WTC11 (cell line): ENCODE measurements at regions of chr19 and their contacts with region 1.

Region 1: DNA sequence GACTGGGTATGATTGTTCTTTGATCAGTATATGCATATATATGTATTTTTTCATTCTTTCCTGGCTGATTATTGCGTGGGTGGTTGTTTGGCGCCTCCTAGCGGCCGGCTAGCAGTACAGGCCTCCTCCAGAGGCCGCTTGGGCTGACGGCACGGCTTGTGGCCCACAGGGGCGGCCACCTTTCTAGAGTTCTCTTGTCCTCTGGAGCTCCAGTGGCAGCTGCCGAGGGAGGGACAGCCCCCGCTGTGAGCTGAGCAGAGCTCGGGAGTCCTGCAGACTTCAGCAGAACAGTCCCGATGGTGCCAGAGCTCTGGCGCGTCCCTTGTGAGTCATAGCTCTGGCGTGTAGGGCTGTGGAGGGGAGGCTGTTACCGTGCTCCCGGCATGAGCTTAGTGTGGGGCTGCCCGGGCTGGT is 22.5 kb upstream of the ZNF429 start:
- DNase-seq: peak; percentile 72
- ATAC-seq: peak; percentile 84
- H3K4me3 Mint-ChIP-seq: no peak overlapping the region
- H3K27ac Mint-ChIP-seq: no peak overlapping the region
- H3K4me1 Mint-ChIP-seq: no peaks in the 10 kb centered on the region
- H3K27me3 Mint-ChIP-seq: peaks cover 5% of the 10 kb centered on the region
- CTCF ChIP-seq: peak; percentile 91

Region 2: DNA sequence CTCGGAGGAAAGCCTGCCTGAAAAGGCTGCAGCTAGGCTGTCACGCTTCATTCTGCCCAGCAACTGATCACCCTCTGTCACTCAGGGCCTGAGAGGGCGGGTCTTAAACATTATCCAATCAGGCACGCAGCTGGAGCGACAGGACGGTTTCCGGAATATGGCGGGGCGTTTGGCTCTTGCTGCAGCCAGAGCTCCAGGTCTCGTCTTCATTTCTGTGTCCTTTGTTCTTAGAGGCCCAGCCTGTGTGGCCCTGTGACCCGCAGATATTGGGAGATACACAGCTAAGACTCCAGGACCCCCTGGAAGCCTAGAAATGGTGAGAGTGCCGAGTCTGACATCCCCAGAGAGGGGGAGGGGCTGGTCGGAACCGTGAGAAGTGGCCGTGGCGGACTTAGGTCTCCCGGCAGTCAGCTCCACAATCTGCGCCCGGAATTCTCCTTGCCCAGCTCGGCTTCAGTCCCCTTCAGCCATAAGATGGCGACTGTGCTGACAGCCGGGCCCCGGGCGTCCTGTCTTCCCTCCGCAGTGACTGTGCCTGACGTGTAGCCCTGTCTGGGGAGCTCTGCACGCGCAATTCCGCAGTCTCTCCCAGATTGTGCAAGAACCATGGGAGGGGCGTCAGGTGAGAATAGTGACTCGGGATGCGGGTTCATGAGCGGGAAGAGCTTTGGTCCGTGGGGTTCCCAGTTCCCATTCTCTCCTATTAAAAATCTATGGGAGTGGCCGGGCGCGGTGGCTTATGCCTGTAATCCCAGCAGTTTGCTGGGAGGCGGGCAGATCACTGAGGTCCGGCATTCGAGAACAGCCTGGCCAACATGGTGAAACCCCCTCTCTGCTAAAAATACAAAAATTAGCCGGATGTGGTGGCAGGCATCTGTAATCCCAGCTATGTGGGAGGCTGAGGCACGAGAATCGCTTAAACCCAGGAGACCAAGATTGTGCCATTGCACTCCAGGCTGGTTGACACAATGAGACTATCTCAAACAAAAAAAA is 22.9 kb after region 1 on chr19 and contains the start of gene ZNF429:
- CTCF ChIA-PET with region 1: interaction called, 22 read pairs
- POLR2A ChIA-PET with region 1: interaction called, 5 read pairs
- DNase-seq: peak; percentile 89
- ATAC-seq: peak; percentile 99
- H3K4me3 Mint-ChIP-seq: peak within 1 kb of the TSS; percentile 99
- H3K27ac Mint-ChIP-seq: peak within 1 kb of the TSS; percentile 99
- H3K4me1 Mint-ChIP-seq: peaks cover 2% of the 10 kb centered on the region; the same call in 1 of the 2 replicates
- H3K27me3 Mint-ChIP-seq: no peaks in the 10 kb centered on the region
- CTCF ChIP-seq: no peak
- total RNA-seq, gene ZNF429: 7.7 to 9.2 TPM (median 9.1 TPM) in 3 replicates

Region 3: GRCh38 chr19:21608571-21608970 is 125.7 kb after region 1 on chr19:
- CTCF ChIA-PET with region 1: no interaction called
- POLR2A ChIA-PET with region 1: no interaction called
- DNase-seq: no peak
- ATAC-seq: no peak
- H3K4me3 Mint-ChIP-seq: no peak overlapping the region
- H3K27ac Mint-ChIP-seq: no peak overlapping the region
- H3K4me1 Mint-ChIP-seq: peaks cover 18% of the 10 kb centered on the region
- H3K27me3 Mint-ChIP-seq: peaks cover 28% of the 10 kb centered on the region
- CTCF ChIP-seq: no peak